Heart left ventricle (tissue), 16 donors: ENCODE measurements at regions of chr2 and their contacts with region 1.

Region 1: GRCh38 chr2:28958689-28959088 is 22.4 kb upstream of the TOGARAM2 start:
- DNase-seq: peak; percentile 47 to 74 (median 72)
- ATAC-seq: peak; percentile 82 to 93 (median 92)
- H3K4me3 ChIP-seq: no peak overlapping the region
- H3K27ac ChIP-seq: no peak overlapping the region
- H3K4me1 ChIP-seq: peaks cover 0 to 13% (median 3%) of the 10 kb centered on the region in 12 donors
- H3K27me3 ChIP-seq: no peaks in the 10 kb centered on the region
- CTCF ChIP-seq: peak; percentile 50 to 74 (median 64)
- POLR2A ChIP-seq: no peak

Region 2: GRCh38 chr2:27765621-27766269 is 1192.9 kb before region 1 on chr2:
- intact Hi-C with region 1: no loop called
- DNase-seq: peak; percentile 45 to 82 (median 62)
- ATAC-seq: peak; percentile 59 to 80 (median 75)
- H3K4me3 ChIP-seq: peak overlapping the region in 11 of 12 donors; percentile 6 to 47 (median 35)
- H3K27ac ChIP-seq: peak overlapping the region in 3 of 12 donors; percentile 14 to 49 (median 17)
- H3K4me1 ChIP-seq: peaks cover 0 to 13% (median 4%) of the 10 kb centered on the region in 12 donors
- H3K27me3 ChIP-seq: no peaks in the 10 kb centered on the region
- CTCF ChIP-seq: no peak
- POLR2A ChIP-seq: peak in 1 of 2 donors; percentile 13

Region 3: GRCh38 chr2:29004755-29005154 is 46.1 kb after region 1 on chr2:
- intact Hi-C with region 1: loop called in 1 of 10 experiments (anchors 1 kb)
- DNase-seq: no peak
- ATAC-seq: no peak
- H3K4me3 ChIP-seq: no peak overlapping the region
- H3K27ac ChIP-seq: no peak overlapping the region
- H3K4me1 ChIP-seq: peaks cover 0 to 17% (median 0%) of the 10 kb centered on the region in 12 donors
- H3K27me3 ChIP-seq: no peaks in the 10 kb centered on the region
- CTCF ChIP-seq: no peak
- POLR2A ChIP-seq: no peak

Region 4: GRCh38 chr2:29115797-29116781 is 157.4 kb after region 1 on chr2:
- intact Hi-C with region 1: loop called in 1 of 10 experiments (anchors 5 kb)
- DNase-seq: peak; percentile 25 to 72 (median 54)
- ATAC-seq: peak; percentile 6 to 47 (median 24)
- H3K4me3 ChIP-seq: peak overlapping the region; percentile 48 to 92 (median 74)
- H3K27ac ChIP-seq: peak overlapping the region; percentile 43 to 94 (median 80)
- H3K4me1 ChIP-seq: peaks cover 0 to 64% (median 18%) of the 10 kb centered on the region in 12 donors
- H3K27me3 ChIP-seq: peaks cover 0 to 3% (median 0%) of the 10 kb centered on the region in 9 donors
- CTCF ChIP-seq: no peak
- POLR2A ChIP-seq: no peak

Region 5: DNA sequence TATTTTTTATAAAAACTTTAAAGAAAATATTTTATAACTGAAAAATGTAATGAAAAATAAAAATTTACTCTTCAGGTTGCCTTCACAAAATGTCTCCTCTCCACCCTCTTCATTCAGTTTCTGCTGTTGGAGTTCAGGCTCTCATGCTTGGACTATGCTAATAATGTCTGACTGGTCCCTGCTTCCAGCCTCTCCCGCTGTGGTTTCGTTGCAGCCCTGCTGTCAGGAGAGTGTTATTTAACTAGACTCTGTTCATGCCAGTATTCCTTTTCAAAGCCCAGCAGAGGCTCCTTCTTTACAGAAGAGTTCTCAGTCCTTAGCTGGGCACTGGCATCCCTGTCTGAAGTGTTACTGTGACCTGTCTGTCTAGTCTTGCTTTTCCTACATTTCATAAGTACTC is 196.9 kb after region 1 on chr2:
- intact Hi-C with region 1: no loop called
- DNase-seq: no peak
- ATAC-seq: no peak
- H3K4me3 ChIP-seq: no peak overlapping the region
- H3K27ac ChIP-seq: no peak overlapping the region
- H3K4me1 ChIP-seq: no peaks in the 10 kb centered on the region
- H3K27me3 ChIP-seq: no peaks in the 10 kb centered on the region
- CTCF ChIP-seq: no peak
- POLR2A ChIP-seq: no peak

Region 6: DNA sequence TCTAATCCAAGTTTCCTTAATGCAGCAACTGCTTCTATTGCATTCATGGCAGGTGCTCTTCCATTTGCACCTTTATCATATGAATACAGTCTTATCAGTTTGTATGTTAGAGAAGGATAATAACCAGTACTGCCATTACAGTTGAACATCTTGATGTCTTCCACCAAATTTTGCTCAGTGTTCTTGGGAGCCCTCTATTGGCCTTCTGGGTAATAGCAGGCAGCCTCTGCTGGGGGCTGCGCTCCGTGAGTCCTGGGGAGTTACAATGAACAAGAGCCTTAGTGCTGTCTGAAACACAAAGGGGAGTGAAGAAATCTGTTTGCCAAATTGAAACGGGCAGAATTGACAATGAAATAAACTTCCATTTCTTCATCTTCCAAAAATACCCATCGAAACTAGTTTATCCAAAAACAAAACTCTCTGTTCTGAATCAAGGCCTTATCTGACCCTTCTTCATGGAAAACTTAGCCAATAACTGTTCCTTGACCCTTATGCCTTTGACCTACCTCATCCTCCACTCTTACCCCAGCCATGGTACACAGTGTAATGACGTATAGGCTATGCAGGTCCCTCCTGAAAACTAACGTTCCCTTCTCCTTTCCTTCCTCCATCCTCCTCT is 882.8 kb after region 1 on chr2:
- intact Hi-C with region 1: loop called in 7 of 10 experiments (anchors 5 to 10 kb)
- DNase-seq: no peak
- ATAC-seq: peak in 1 of 4 donors; percentile 66
- H3K4me3 ChIP-seq: no peak overlapping the region
- H3K27ac ChIP-seq: no peak overlapping the region
- H3K4me1 ChIP-seq: no peaks in the 10 kb centered on the region
- H3K27me3 ChIP-seq: peaks cover 0 to 25% (median 2%) of the 10 kb centered on the region in 9 donors
- CTCF ChIP-seq: peak; percentile 72 to 89 (median 82)
- POLR2A ChIP-seq: no peak

Region 7: GRCh38 chr2:30026087-30027055 is 1067.7 kb after region 1 on chr2:
- intact Hi-C with region 1: loop called in 1 of 10 experiments (anchors 10 kb)
- DNase-seq: peak; percentile 25 to 64 (median 40)
- ATAC-seq: peak; percentile 66 to 82 (median 80)
- H3K4me3 ChIP-seq: no peak overlapping the region
- H3K27ac ChIP-seq: no peak overlapping the region
- H3K4me1 ChIP-seq: no peaks in the 10 kb centered on the region
- H3K27me3 ChIP-seq: peaks cover 0 to 35% (median 7%) of the 10 kb centered on the region in 9 donors
- CTCF ChIP-seq: peak; percentile 32 to 71 (median 64)
- POLR2A ChIP-seq: no peak